Transverse colon (tissue), 4 donors: ENCODE measurements at regions of chr17 and their contacts with region 1.

Region 1: GRCh38 chr17:80673152-80673920 is 128.7 kb downstream of the RPTOR start:
- DNase-seq: no peak
- H3K4me3 ChIP-seq: no peak overlapping the region
- H3K27ac ChIP-seq: no peak overlapping the region
- H3K4me1 ChIP-seq: peaks cover 0 to 28% (median 15%) of the 10 kb centered on the region in 4 donors
- H3K27me3 ChIP-seq: no peaks in the 10 kb centered on the region
- CTCF ChIP-seq: no peak
- EP300 ChIP-seq: no peak
- POLR2A ChIP-seq: no peak

Region 2: DNA sequence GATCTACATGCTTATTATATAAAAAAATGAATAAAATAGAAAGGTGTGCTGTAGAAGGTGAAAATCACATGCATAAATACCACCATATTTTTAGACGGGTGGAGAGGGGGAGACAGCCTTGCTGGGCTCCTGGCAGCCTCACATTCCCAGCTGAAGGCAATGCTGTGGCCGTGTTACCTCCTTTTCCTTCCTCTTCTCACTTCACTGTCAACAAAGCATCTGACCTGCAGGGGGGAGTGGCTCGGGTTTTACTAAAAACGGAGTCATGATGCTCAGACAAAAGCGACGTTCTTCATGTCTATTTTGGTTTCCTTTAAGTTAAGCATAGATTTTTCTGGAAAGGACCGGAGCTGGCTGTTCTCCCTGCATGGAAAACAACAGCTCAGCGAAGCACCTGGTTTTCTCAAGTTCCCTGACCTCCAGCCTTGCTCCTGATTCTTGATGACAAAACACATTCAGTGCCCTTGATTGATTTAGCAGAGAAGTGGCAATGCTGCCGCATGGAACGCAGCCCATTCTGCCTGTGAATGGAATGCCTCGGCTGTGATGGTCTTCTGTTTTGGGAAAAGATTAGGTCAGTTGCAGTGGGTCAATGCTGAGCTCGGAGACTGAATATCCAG is 134.2 kb before region 1 on chr17:
- in situ Hi-C with region 1: no loop called
- intact Hi-C with region 1: no loop called
- DNase-seq: no peak
- H3K4me3 ChIP-seq: no peak overlapping the region
- H3K27ac ChIP-seq: no peak overlapping the region
- H3K4me1 ChIP-seq: peaks cover 0 to 4% (median 0%) of the 10 kb centered on the region in 4 donors
- H3K27me3 ChIP-seq: peaks cover 27% of the 10 kb centered on the region
- CTCF ChIP-seq: no peak
- EP300 ChIP-seq: no peak
- POLR2A ChIP-seq: no peak

Region 3: DNA sequence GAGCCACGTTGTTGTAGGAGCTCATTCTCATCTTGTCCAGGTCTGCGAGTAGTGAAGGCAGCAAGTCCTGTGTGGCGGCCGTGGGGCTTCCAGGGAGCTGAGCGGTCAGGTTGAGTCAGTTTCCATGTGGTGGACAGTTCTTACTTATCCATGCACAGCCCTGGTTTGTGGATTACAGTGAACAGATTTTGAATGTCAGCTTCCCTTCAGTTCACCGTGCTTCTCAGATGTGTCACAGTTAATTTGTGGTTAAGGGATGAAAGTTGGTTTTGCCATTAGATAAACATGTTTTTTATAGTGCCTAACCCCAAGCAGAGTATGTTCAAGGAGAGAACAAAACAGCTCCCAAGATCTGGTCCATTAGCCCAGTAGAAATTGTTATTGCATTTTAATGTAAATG is 25.6 kb before region 1 on chr17:
- in situ Hi-C with region 1: no loop called
- intact Hi-C with region 1: loop called (anchors 1 kb)
- DNase-seq: no peak
- H3K4me3 ChIP-seq: no peak overlapping the region
- H3K27ac ChIP-seq: no peak overlapping the region
- H3K4me1 ChIP-seq: peaks cover 0 to 7% (median 0%) of the 10 kb centered on the region in 4 donors
- H3K27me3 ChIP-seq: no peaks in the 10 kb centered on the region
- CTCF ChIP-seq: no peak
- EP300 ChIP-seq: no peak
- POLR2A ChIP-seq: no peak

Region 4: DNA sequence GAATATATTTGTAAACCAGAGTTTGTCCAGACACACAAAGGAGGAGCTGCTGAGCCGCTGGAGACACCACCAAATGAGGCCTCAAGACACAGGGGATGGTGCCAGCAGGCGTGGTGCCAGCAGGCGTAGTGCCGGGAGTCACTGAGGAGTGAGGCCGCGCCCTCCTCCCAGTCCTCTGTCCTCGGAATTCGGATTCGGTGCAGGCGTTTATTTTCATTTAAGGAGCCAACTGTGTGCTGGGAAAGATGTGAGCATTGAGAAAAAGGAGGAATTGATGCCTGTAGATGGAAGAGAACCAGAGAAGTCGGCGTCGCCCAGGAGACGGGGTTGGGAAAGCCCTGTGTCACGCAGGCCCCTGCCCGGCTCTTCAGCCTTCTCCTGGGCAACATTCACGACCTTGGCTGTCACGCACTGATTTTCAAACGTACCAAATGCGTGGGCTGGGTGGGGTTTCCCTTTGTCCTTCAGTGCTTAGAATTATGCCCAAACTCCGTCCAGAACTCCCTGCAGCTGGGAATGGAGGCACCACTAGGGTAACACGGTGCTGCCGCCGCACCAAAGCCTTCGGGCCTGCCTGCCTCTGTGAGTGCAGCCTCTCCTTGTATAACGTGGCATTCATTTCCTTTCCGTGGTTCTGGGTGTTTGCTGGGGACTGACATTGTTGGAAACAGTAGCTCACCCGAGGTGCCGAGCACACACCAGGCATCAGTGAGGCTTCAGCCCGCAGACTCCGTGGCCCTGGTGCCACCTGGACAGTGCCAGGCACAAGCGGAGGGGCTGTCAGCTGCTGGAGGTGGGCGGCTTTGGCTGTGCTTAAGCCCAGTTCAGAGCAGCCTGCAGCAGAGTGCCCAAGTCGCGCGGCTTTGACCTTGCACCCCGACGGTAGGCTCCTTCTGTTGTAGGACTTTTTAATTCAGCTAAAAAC is 269.3 kb after region 1 on chr17:
- in situ Hi-C with region 1: no loop called
- intact Hi-C with region 1: no loop called
- DNase-seq: peak; percentile 88
- H3K4me3 ChIP-seq: no peak overlapping the region
- H3K27ac ChIP-seq: peak overlapping the region; percentile 76 to 86 (median 80)
- H3K4me1 ChIP-seq: peaks cover 6 to 20% (median 18%) of the 10 kb centered on the region in 4 donors
- H3K27me3 ChIP-seq: no peaks in the 10 kb centered on the region
- CTCF ChIP-seq: peak in 2 of 5 experiments; percentile 9 to 15
- EP300 ChIP-seq: no peak
- POLR2A ChIP-seq: no peak